WTC11 (cell line): ENCODE measurements at regions of chr20 and their contacts with region 1.

Region 1: DNA sequence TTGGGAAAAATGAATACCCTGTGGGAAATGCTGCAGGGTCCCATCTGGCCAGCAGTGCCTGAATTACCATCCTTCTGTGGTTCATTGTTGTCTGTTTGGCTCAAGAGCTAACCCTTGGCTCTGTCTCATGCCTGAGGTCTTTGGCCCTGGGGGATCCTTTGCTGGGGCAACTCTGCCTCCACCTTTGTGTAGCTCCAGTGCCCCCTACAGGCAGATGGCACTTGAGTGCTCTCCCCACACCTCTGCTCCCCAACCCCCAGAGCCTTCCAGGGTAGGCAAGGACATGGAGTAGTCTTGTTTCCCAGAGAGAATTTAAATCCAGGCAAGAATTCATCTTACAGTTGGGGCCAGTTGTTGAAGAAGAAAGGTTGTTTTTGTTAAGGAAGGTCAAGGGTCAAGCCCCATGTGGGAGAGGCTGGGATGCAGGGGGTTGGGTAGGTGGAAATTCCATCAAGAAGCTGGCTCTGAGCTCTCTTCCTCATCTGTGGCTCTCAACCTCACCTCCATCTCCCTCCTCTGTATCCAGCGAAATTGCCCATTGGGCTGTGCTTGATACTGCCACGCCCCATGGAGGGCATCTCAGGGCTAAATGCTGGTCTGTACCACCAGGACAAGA is 44.2 kb downstream of the ZNF831 start:
- DNase-seq: peak; percentile 86
- ATAC-seq: peak; percentile 98
- H3K4me3 Mint-ChIP-seq: no peak overlapping the region
- H3K27ac Mint-ChIP-seq: peak overlapping the region; percentile 60; the same call in 1 of the 2 replicates
- H3K4me1 Mint-ChIP-seq: peaks cover 29% of the 10 kb centered on the region
- H3K27me3 Mint-ChIP-seq: peaks cover 20% of the 10 kb centered on the region
- CTCF ChIP-seq: peak; percentile 56; the same call in 1 of the 2 replicates

Region 2: DNA sequence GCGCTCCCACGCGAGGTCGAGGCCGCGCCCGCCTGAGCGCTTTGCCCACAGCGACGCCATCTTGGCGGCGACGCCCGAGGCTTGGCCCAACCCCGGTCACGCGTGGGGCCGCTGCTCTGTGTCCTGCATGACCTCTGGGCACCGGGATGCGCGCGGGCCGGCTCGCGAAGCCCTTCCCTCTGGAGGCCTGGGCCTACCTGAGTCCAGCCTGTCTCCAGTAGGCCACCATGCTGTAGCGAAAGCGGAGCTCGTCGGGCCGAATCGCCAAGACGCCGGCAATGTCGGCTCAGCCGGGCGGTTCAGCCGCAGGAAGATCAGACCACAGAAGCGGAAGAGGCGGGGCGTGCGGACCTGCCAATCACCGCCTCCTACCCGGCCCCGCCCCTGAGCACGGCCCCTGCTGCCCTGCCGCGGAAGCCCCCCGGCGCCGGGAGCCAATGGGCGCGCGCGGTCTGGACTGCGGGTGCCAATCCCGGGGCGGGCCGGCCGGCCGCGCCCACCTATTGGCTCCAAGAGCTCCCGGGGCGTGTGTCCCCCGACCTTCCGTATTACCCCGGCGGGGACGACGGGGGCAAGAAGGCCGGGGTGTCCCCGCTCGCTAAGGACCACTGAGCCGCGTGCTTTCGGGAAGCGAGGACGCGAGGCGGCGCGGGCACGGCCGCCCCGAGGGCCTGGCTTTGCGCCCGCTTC is 175.7 kb before region 1 on chr20 and contains the start of gene ATP5F1E:
- CTCF ChIA-PET with region 1: interaction called, 10 read pairs
- POLR2A ChIA-PET with region 1: no interaction called
- DNase-seq: peak; percentile 95
- ATAC-seq: peak; percentile 99
- H3K4me3 Mint-ChIP-seq: peak within 1 kb of the TSS; percentile 88
- H3K27ac Mint-ChIP-seq: peak within 1 kb of the TSS; percentile 88
- H3K4me1 Mint-ChIP-seq: peaks cover 28% of the 10 kb centered on the region
- H3K27me3 Mint-ChIP-seq: peaks cover 47% of the 10 kb centered on the region
- CTCF ChIP-seq: no peak
- total RNA-seq, gene ATP5F1E: 41.1 to 44.8 TPM (median 43.0 TPM) in 3 replicates

Region 3: GRCh38 chr20:59087829-59088433 is 119.9 kb before region 1 on chr20:
- CTCF ChIA-PET with region 1: interaction called, 36 read pairs
- POLR2A ChIA-PET with region 1: no interaction called
- DNase-seq: peak; percentile 88
- ATAC-seq: peak; percentile 92
- H3K4me3 Mint-ChIP-seq: no peak overlapping the region
- H3K27ac Mint-ChIP-seq: no peak overlapping the region
- H3K4me1 Mint-ChIP-seq: peaks cover 4% of the 10 kb centered on the region; the same call in 1 of the 2 replicates
- H3K27me3 Mint-ChIP-seq: peaks cover 4% of the 10 kb centered on the region; the same call in 1 of the 2 replicates
- CTCF ChIP-seq: peak; percentile 88

Region 4: DNA sequence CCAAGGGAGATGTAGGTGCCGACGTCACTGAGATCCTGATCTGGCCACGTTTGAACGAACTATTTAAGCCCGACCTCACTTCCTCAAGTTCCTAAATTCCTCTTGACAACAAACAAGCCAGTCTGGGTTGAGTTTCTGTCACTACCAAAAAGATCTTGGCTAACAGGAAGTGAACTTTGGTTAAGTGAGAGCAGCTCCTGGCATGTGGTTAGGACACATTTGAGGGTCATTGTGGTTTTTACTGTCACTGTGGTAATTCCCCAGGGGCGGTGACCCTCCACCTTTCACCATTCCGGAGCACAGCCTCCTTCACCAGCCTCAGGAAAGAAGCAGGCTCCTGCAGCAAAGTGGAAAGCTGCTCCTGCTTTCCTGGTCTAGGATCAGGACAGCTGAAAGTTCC is 87.4 kb before region 1 on chr20:
- CTCF ChIA-PET with region 1: interaction called, 15 read pairs
- POLR2A ChIA-PET with region 1: no interaction called
- DNase-seq: no peak
- ATAC-seq: no peak
- H3K4me3 Mint-ChIP-seq: no peak overlapping the region
- H3K27ac Mint-ChIP-seq: no peak overlapping the region
- H3K4me1 Mint-ChIP-seq: peaks cover 42% of the 10 kb centered on the region
- H3K27me3 Mint-ChIP-seq: peaks cover 5% of the 10 kb centered on the region
- CTCF ChIP-seq: no peak

Region 5: GRCh38 chr20:59191756-59192532 is 15.9 kb before region 1 on chr20:
- CTCF ChIA-PET with region 1: interaction called, 15 read pairs
- POLR2A ChIA-PET with region 1: interaction called, 14 read pairs
- DNase-seq: no peak
- ATAC-seq: no peak
- H3K4me3 Mint-ChIP-seq: no peak overlapping the region
- H3K27ac Mint-ChIP-seq: no peak overlapping the region
- H3K4me1 Mint-ChIP-seq: no peaks in the 10 kb centered on the region
- H3K27me3 Mint-ChIP-seq: no peaks in the 10 kb centered on the region
- CTCF ChIP-seq: no peak

Region 6: DNA sequence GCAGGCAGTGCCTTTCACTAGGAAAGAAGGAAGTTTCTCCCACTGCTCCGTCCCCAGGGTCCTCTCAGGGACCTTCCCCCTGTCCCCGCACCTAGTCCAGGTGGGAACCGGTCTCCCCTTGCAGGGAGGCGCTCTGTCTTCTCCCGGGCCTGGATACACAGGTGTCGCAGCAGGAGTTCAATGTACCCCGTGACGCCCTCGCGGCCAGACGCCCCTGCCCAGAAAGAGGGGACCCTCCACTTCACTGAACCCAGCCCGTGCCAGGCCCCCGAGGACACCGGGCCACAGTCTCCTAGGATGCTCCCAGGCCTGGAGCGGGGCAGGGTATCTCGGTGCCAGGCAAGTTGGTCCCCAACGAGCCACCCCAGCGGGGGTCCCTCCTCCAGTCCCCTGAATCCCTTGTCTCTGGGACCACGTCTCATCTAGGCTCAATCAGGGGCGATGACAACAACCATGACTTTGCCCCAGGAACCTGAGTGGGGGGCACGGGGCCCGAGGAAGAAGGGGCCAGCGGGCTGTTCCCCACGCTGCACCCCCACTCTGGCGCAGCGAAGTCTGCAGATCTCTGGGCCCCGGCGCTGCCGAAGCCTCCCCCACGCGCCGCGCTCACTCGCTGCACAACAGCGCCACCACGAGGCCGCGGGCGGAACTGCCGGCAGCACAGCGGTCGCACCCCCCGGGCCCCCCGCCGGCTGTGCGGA is 195.6 kb after region 1 on chr20:
- CTCF ChIA-PET with region 1: interaction called, 11 read pairs
- POLR2A ChIA-PET with region 1: no interaction called
- DNase-seq: peak; percentile 86
- ATAC-seq: peak; percentile 76
- H3K4me3 Mint-ChIP-seq: peak overlapping the region; percentile 58; the same call in 1 of the 2 replicates
- H3K27ac Mint-ChIP-seq: no peak overlapping the region
- H3K4me1 Mint-ChIP-seq: peaks cover 16% of the 10 kb centered on the region
- H3K27me3 Mint-ChIP-seq: peaks cover 12% of the 10 kb centered on the region
- CTCF ChIP-seq: peak; percentile 100

Region 7: DNA sequence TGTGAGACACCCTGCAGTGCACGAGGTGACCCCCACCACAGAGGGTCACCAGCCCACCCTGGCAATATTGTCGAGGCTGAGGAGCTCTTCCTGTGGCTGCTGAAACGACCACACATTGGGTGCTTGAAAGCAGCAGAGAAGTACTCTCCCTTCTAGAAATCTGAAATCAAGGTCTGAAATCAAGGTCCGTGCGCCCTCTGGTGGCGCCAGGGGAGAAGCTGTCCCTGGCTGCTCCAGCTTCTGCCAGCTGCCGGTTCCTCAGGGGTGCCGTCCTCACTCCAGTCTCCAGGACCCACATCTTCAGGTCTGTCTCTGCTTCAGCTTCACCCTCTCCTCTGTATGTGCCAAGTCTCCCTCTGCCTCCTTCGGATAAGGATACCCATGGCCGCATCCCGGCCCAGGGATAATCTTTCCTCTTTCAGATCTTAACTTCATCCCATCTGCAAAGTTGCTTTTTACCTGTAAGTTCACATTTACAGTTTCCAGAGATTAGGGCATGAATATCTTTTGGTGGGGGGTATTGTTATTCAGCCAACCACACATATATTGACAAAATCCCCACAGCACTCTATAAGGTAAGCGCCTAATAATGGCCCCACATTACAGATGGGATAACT is 288.2 kb after region 1 on chr20:
- CTCF ChIA-PET with region 1: interaction called, 10 read pairs
- POLR2A ChIA-PET with region 1: no interaction called
- DNase-seq: peak; percentile 80
- ATAC-seq: peak; percentile 95
- H3K4me3 Mint-ChIP-seq: no peak overlapping the region
- H3K27ac Mint-ChIP-seq: no peak overlapping the region
- H3K4me1 Mint-ChIP-seq: no peaks in the 10 kb centered on the region
- H3K27me3 Mint-ChIP-seq: peaks cover 28% of the 10 kb centered on the region
- CTCF ChIP-seq: peak; percentile 73